Heart left ventricle (tissue), 16 donors: ENCODE measurements at regions of chr3 and their contacts with region 1.

Region 1: DNA sequence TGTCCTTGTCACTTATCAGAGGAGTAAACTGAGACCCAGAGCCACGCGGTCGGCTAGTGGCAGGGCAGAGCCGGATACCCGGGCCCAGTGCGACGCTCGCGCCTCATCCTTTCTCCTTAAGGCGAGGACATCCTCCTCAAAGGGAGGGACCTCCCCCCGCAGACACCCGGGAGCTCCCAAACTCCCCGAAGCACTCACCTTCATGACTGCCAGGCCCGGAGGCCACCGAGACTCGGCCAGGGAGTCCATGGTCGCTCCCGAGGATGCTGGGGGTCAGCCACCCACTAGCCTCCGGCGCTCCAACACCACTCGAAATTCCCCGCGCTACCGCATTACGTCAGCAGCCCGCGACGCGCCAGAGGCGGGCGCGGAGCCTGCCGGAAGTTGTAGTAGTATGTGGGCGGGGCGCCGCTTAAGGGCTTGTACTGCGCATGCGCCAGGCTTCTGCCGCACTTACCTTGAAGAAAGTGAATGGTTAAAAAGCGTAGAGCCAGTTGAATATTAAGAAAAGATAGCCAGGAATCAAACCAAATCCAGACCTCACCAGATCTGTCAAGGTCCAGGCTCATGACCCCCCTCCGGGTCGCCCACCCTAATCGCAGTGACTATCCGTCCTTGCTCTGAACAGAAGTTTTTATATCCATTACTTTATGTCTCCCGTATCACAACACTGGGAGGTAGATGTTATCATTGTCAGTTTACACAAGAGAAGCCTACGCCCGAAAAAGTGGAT is at the start of gene RAD18:
- DNase-seq: peak; percentile 89 to 96 (median 92)
- ATAC-seq: peak; percentile 88 to 98 (median 96)
- H3K4me3 ChIP-seq: peak within 1 kb of the TSS; percentile 59 to 97 (median 79)
- H3K27ac ChIP-seq: peak within 1 kb of the TSS in 11 of 12 donors; percentile 45 to 86 (median 76)
- H3K4me1 ChIP-seq: peaks cover 0 to 21% (median 10%) of the 10 kb centered on the region in 12 donors
- H3K27me3 ChIP-seq: peaks cover 0 to 6% (median 0%) of the 10 kb centered on the region in 9 donors
- CTCF ChIP-seq: no peak
- POLR2A ChIP-seq: peak in 1 of 2 donors; percentile 43
- total RNA-seq, gene RAD18: 1.4 to 6.1 (median 2.9) TPM

Region 2: GRCh38 chr3:8769088-8769822 is 194.0 kb before region 1 on chr3 and contains the start of gene OXTR:
- intact Hi-C with region 1: loop called in 1 of 10 experiments (anchors 10 kb)
- DNase-seq: peak; percentile 45 to 84 (median 56)
- ATAC-seq: peak; percentile 72 to 96 (median 94)
- H3K4me3 ChIP-seq: peak within 1 kb of the TSS in 10 of 12 donors; percentile 1 to 50 (median 42)
- H3K27ac ChIP-seq: no peak within 1 kb of the TSS
- H3K4me1 ChIP-seq: peaks cover 0 to 27% (median 9%) of the 10 kb centered on the region in 12 donors
- H3K27me3 ChIP-seq: peaks cover 17 to 44% (median 24%) of the 10 kb centered on the region in 9 donors
- CTCF ChIP-seq: peak; percentile 96 to 100 (median 99)
- POLR2A ChIP-seq: no peak
- total RNA-seq, gene OXTR: 0.12 to 0.54 (median 0.27) TPM in 6 of 9 donors, not detected in the others